IMR-90 (cell line): ENCODE measurements at regions of chr2 and their contacts with region 1.

Region 1: DNA sequence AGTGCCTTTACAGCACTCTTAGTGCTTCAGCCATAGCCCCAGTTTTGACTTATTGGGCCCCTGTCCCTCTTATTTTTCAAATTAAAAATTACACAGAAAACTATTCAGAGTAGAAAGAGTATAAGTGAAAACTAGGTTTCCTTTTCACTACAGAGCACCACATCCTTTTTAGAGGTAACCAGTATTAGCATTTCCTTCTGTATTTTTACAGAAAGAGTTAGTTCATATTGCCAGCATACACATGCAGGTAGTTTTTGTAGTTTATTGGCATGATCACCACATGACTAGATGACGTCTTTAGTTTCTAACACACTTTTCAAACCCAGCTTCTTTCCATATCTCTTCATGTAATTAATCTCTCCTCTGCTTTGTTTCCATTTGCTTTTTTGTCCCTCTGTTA is 66.4 kb downstream of the UBE2E3 start:
- DNase-seq: no peak
- ATAC-seq: no peak
- H3K4me3 ChIP-seq: no peak overlapping the region
- H3K27ac ChIP-seq: no peak overlapping the region
- H3K4me1 ChIP-seq: no peaks in the 10 kb centered on the region
- H3K27me3 ChIP-seq: no peaks in the 10 kb centered on the region
- CTCF ChIP-seq: no peak
- POLR2A ChIP-seq: no peak
- RAD21 ChIP-seq: no peak

Region 2: DNA sequence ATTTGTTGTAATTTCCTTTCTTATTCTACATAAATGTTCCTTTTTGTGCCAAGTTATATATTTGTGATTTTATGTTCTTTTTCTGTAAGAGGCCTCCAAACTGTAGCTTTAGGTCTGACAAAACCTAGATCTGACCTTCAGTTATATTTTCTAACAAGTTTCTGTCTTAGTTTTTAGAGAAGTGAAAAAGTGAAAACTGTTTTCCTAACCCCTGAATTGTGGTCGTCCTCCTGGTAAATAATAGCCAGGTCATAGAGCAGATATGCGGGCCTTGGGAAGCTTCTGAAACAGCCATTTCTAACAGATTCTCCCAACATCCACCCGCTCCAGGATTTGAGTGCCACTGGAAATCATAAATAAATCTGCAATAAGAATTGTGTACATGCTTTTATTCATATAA is 641.3 kb before region 1 on chr2:
- CTCF ChIA-PET with region 1: no interaction called
- POLR2A ChIA-PET with region 1: no interaction called
- dilution Hi-C with region 1: no loop called
- in situ Hi-C with region 1: no loop called
- intact Hi-C with region 1: loop called (anchors 10 kb)
- DNase-seq: no peak
- ATAC-seq: no peak
- H3K4me3 ChIP-seq: no peak overlapping the region
- H3K27ac ChIP-seq: no peak overlapping the region
- H3K4me1 ChIP-seq: no peaks in the 10 kb centered on the region
- H3K27me3 ChIP-seq: no peaks in the 10 kb centered on the region
- CTCF ChIP-seq: no peak
- POLR2A ChIP-seq: no peak
- RAD21 ChIP-seq: no peak